ENCODE measurements at regions of chr3 and their contacts with region 1.

Region 1: GRCh38 chr3:104564045-104564643 is 802.6 kb upstream of the ALCAM start:
- DNase-seq: no peak
- H3K4me3 ChIP-seq: no peak overlapping the region
- H3K27ac ChIP-seq: no peak overlapping the region
- H3K4me1 ChIP-seq: no peaks in the 10 kb centered on the region
- H3K27me3 ChIP-seq: no peaks in the 10 kb centered on the region
- CTCF ChIP-seq: peak in 9 of 11 experiments; percentile 16 to 73 (median 66)
- POLR2A ChIP-seq: no peak

Region 2: DNA sequence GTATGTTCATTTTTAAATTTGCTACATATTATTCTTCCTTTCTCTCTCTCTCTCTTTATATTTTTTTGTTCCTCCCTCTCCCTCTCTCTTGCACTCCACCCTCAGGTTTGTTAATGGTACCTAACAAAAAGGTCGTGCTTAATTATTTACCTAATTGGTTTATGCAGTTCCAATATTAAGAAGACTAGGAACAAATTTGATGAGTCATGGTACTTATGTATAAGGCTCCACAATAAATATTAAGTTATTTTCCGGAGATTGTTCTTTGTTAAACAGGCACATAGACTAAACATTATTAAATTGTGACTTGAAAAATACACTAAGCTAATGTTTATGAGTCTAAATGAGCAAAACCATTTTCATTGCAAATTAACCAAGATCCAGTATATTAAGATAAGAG is 398.3 kb before region 1 on chr3:
- intact Hi-C with region 1: no loop called
- DNase-seq: no peak
- H3K4me3 ChIP-seq: no peak overlapping the region
- H3K27ac ChIP-seq: no peak overlapping the region
- H3K4me1 ChIP-seq: no peaks in the 10 kb centered on the region
- H3K27me3 ChIP-seq: no peaks in the 10 kb centered on the region
- CTCF ChIP-seq: no peak
- POLR2A ChIP-seq: no peak

Region 3: DNA sequence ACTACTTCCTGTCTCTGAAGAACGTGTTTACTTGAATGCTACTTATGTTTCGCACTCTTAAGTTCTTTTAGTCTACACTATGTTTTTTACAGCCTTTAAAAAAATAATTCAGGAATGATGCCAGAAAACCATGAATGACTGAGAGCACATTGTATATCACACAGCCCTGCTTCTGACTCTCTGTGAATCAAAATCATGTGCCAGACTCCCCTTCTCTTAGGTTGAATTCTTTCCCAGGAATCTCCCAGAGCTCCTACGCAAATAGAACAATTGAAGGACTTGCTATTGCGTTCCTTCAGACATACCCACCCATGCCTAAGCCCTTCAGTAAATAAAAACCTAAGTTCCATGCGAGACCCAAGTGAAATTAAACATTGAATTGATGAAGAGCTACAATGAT is 20.5 kb after region 1 on chr3:
- intact Hi-C with region 1: no loop called
- DNase-seq: no peak
- H3K4me3 ChIP-seq: no peak overlapping the region
- H3K27ac ChIP-seq: no peak overlapping the region
- H3K4me1 ChIP-seq: no peaks in the 10 kb centered on the region
- H3K27me3 ChIP-seq: no peaks in the 10 kb centered on the region
- CTCF ChIP-seq: no peak
- POLR2A ChIP-seq: no peak

Region 4: GRCh38 chr3:105518806-105519418 is 954.8 kb after region 1 on chr3:
- intact Hi-C with region 1: loop called (anchors 10 kb)
- DNase-seq: no peak
- H3K4me3 ChIP-seq: no peak overlapping the region
- H3K27ac ChIP-seq: no peak overlapping the region
- H3K4me1 ChIP-seq: peaks cover 0 to 7% (median 0%) of the 10 kb centered on the region in 6 donors
- H3K27me3 ChIP-seq: no peaks in the 10 kb centered on the region
- CTCF ChIP-seq: peak in 10 of 11 experiments; percentile 32 to 69 (median 54)
- POLR2A ChIP-seq: no peak